Activated CD4-positive, alpha-beta T cell treated with anti-CD3 and anti-CD28 coated beads, Interleukin-2, amount 10 ng/mL, durations not matched to agents 24 days and 14 days (primary cell): ENCODE measurements at regions of chr14 and their contacts with region 1.

Region 1: DNA sequence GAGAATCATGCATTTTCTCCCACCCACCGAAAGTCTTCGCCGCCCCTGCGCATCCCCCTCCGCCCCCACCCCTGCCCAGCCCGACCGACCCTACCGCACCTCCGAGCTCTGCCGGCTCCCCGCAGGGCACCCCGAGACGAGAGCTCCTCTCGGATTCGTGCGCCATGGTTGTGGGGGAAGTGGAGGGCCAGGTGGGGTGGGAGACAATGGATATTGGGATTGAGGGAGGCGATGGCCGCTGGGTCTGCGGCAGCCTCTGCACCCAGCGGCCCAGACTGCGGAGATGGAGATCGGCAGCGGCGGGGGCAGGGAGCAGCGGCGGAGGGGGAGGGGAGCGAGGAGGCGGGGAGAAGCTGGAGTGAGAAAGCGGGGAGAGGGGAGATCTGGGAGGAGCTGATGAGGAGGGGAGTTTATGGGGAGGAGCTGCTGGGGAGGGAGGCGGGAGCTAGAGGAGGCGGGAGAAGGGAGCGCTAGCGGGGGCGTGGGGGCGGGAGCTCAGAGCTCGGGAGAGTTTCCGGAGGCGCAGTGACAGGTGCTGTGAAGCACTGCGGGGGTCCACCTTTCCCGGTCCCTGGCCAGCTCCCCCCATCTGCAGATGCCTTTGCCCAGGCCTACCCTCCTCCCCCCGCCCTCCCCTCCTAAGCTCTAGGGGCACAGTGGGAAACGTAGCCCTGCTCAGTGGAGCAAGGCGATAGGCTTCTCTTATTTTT is at the start of gene SALL2:
- DNase-seq: peak; percentile 87
- H3K4me3 Mint-ChIP-seq: peak within 1 kb of the TSS; percentile 80
- H3K27ac Mint-ChIP-seq: peak within 1 kb of the TSS; percentile 66
- H3K4me1 Mint-ChIP-seq: peaks cover 12% of the 10 kb centered on the region
- H3K27me3 Mint-ChIP-seq: peaks cover 17% of the 10 kb centered on the region
- total RNA-seq, gene SALL2: 1.6 and 1.7 TPM in 2 replicates

Region 2: DNA sequence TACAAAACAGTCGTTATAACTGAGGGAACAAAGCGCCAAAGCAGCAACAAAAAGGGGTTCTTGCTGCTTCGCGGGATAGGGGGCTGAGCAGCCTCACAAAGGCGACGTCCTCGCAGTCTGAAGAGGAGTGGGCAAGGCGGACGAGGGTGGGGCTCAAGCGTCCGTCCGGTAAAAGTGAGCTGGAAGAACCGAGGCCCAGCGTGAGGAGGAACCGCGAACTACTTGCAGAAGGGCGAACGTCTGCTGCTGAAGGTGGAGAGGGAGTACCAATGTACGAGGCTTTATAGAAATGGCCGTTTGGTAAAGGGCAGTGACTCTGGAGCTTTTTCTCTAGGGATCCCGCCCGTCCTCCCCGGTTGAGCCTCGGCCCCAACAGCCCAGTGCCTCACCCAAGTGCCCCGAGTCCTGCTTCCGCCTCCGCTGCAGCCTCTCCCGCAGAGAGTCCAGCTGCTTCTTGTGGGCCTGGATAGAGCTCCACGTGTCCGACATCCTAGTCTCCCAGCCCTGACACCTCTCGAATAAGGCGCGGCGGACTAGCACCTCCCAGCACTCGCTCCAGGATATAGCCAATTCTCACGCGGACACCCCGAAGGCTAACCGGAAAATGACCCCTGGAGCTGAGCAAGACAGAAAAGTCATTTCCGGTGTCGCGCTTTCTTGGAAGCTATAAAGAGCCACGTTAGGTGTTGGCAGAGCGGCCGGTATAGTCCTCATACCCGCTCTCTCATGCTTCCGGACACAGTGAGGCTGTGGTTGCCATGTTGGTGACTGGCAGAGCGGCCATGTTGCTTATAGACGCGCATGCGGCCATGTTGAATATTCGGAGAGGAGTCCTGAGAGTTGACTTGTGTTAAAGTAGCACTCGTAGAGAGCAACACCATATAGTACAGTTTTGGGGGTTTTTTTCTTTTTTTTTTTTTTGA is 15.1 kb before region 1 on chr14 and contains the start of gene METTL3:
- intact Hi-C with region 1: loop called (anchors 1 kb)
- DNase-seq: peak; percentile 98
- H3K4me3 Mint-ChIP-seq: peak within 1 kb of the TSS; percentile 99
- H3K27ac Mint-ChIP-seq: peak within 1 kb of the TSS; percentile 98
- H3K4me1 Mint-ChIP-seq: peaks cover 28% of the 10 kb centered on the region
- H3K27me3 Mint-ChIP-seq: peaks cover 4% of the 10 kb centered on the region
- total RNA-seq, gene METTL3: 72.9 and 81.7 TPM in 2 replicates